ENCODE measurements at regions of chr11 and their contacts with region 1.

Region 1: DNA sequence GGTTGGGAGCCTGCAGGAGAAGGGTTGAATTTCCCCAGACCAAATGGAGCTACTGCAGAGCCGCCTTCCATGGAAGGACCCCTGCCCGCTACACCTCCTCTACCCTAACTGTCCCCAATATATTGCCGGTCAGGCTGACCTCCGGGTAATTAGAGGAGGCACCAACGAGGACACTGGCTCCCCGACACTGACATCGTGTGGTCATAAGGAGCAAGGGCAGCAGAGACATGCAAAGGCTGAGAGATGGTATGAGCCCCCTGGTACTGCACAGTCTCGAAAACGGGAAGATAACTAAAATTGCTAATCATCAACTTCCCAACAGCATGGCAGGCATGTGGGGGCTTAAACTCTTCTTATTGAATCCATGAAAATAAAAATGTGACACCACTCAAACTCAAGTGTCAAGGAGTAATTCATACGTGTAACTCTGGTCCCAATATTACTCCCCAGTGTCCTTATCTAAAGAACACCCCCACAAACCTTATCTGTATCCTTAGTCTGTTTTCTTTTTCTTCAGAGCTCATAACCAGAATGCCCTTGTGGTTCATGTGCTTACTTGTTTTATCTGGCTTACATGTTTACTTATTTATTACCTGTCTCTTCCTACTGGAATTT is 4.4 kb downstream of the CAVIN3 start:
- DNase-seq: peak in 5 of 9 experiments; percentile 2 to 57 (median 27)
- ATAC-seq: peak; percentile 68
- H3K4me3 ChIP-seq: no peak overlapping the region
- H3K4me3 Mint-ChIP-seq: no peak overlapping the region
- H3K27ac ChIP-seq: no peak overlapping the region
- H3K27ac Mint-ChIP-seq: no peak overlapping the region
- H3K4me1 ChIP-seq: no peaks in the 10 kb centered on the region
- H3K4me1 Mint-ChIP-seq: peaks cover 7% of the 10 kb centered on the region
- H3K27me3 ChIP-seq: peaks cover 5 to 6% of the 10 kb centered on the region in 2 experiments
- H3K27me3 Mint-ChIP-seq: peaks cover 42% of the 10 kb centered on the region
- CTCF ChIP-seq: peak; percentile 58

Region 2: GRCh38 chr11:6022956-6023355 is 293.0 kb before region 1 on chr11:
- CTCF ChIA-PET with region 1: interaction called, 4 read pairs
- POLR2A ChIA-PET with region 1: no interaction called
- intact Hi-C with region 1: loop called (anchors 1 to 2 kb)
- DNase-seq: peak in 2 of 9 experiments; percentile 60 to 66
- ATAC-seq: no peak
- H3K4me3 ChIP-seq: no peak overlapping the region
- H3K4me3 Mint-ChIP-seq: no peak overlapping the region
- H3K27ac ChIP-seq: no peak overlapping the region
- H3K27ac Mint-ChIP-seq: no peak overlapping the region
- H3K4me1 ChIP-seq: no peaks in the 10 kb centered on the region
- H3K4me1 Mint-ChIP-seq: no peaks in the 10 kb centered on the region
- H3K27me3 ChIP-seq: no peaks in the 10 kb centered on the region
- H3K27me3 Mint-ChIP-seq: peaks cover 18% of the 10 kb centered on the region
- CTCF ChIP-seq: peak; percentile 37

Region 3: DNA sequence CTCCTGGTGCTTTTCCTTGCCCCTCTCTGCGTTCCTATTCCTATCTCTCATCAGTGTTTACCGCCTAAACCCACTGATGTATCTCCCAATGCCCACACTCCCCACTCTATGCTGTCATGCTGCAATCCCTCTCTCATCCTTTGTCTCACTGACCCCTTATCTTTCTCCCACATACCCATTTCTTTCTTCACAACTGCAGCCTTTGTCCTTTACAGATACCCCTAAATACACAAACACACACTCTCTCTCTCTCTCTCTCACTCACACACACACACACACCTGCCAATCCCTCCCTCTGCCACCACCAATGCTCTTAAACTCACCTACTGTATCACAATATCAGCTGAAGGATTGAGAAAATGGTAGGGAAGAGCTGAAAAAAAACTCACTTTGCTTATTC is 140.5 kb before region 1 on chr11:
- CTCF ChIA-PET with region 1: no interaction called
- POLR2A ChIA-PET with region 1: no interaction called
- intact Hi-C with region 1: no loop called
- DNase-seq: no peak
- ATAC-seq: no peak
- H3K4me3 ChIP-seq: no peak overlapping the region
- H3K4me3 Mint-ChIP-seq: no peak overlapping the region
- H3K27ac ChIP-seq: no peak overlapping the region
- H3K27ac Mint-ChIP-seq: no peak overlapping the region
- H3K4me1 ChIP-seq: no peaks in the 10 kb centered on the region
- H3K4me1 Mint-ChIP-seq: peaks cover 13% of the 10 kb centered on the region
- H3K27me3 ChIP-seq: no peaks in the 10 kb centered on the region
- H3K27me3 Mint-ChIP-seq: peaks cover 8% of the 10 kb centered on the region
- CTCF ChIP-seq: no peak

Region 4: GRCh38 chr11:6251120-6251733 is 64.7 kb before region 1 on chr11:
- CTCF ChIA-PET with region 1: interaction called, 3 read pairs
- POLR2A ChIA-PET with region 1: no interaction called
- intact Hi-C with region 1: loop called in 1 of 2 experiments (anchors 1 kb)
- DNase-seq: peak in 7 of 9 experiments; percentile 14 to 59 (median 47)
- ATAC-seq: peak; percentile 83
- H3K4me3 ChIP-seq: no peak overlapping the region
- H3K4me3 Mint-ChIP-seq: no peak overlapping the region
- H3K27ac ChIP-seq: no peak overlapping the region
- H3K27ac Mint-ChIP-seq: no peak overlapping the region
- H3K4me1 ChIP-seq: no peaks in the 10 kb centered on the region
- H3K4me1 Mint-ChIP-seq: no peaks in the 10 kb centered on the region
- H3K27me3 ChIP-seq: no peaks in the 10 kb centered on the region
- H3K27me3 Mint-ChIP-seq: no peaks in the 10 kb centered on the region
- CTCF ChIP-seq: peak; percentile 56

Region 5: GRCh38 chr11:6303661-6304060 is 12.3 kb before region 1 on chr11:
- CTCF ChIA-PET with region 1: interaction called, 10 read pairs
- POLR2A ChIA-PET with region 1: no interaction called
- intact Hi-C with region 1: no loop called
- DNase-seq: no peak
- ATAC-seq: no peak
- H3K4me3 ChIP-seq: no peak overlapping the region
- H3K4me3 Mint-ChIP-seq: no peak overlapping the region
- H3K27ac ChIP-seq: no peak overlapping the region
- H3K27ac Mint-ChIP-seq: no peak overlapping the region
- H3K4me1 ChIP-seq: no peaks in the 10 kb centered on the region
- H3K4me1 Mint-ChIP-seq: no peaks in the 10 kb centered on the region
- H3K27me3 ChIP-seq: no peaks in the 10 kb centered on the region
- H3K27me3 Mint-ChIP-seq: peaks cover 18% of the 10 kb centered on the region
- CTCF ChIP-seq: no peak